ENCODE measurements at regions of chr14 and their contacts with region 1.

Region 1: GRCh38 chr14:58265401-58265800 is 20.8 kb downstream of the PSMA3 start:
- DNase-seq: no peak
- ATAC-seq: no peak
- H3K4me3 ChIP-seq: no peak overlapping the region
- H3K4me3 Mint-ChIP-seq: no peak overlapping the region
- H3K27ac ChIP-seq: no peak overlapping the region
- H3K27ac Mint-ChIP-seq: peak overlapping the region in 7 of 9 donors; percentile 9 to 79 (median 65)
- H3K4me1 ChIP-seq: no peaks in the 10 kb centered on the region
- H3K4me1 Mint-ChIP-seq: peaks cover under 1 to 23% (median 19%) of the 10 kb centered on the region in 7 donors
- H3K27me3 ChIP-seq: no peaks in the 10 kb centered on the region
- H3K27me3 Mint-ChIP-seq: no peaks in the 10 kb centered on the region

Region 2: GRCh38 chr14:58362798-58363412 is 97.5 kb after region 1 on chr14:
- CTCF ChIA-PET with region 1: no interaction called
- POLR2A ChIA-PET with region 1: no interaction called
- intact Hi-C with region 1: loop called in 1 of 2 experiments (anchors 5 kb)
- DNase-seq: peak in 6 of 9 donors; percentile 2 to 55 (median 34)
- ATAC-seq: peak; percentile 63
- H3K4me3 ChIP-seq: no peak overlapping the region
- H3K4me3 Mint-ChIP-seq: no peak overlapping the region
- H3K27ac ChIP-seq: no peak overlapping the region
- H3K27ac Mint-ChIP-seq: no peak overlapping the region
- H3K4me1 ChIP-seq: no peaks in the 10 kb centered on the region
- H3K4me1 Mint-ChIP-seq: peaks cover 0 to 6% (median 0%) of the 10 kb centered on the region in 7 donors
- H3K27me3 ChIP-seq: no peaks in the 10 kb centered on the region
- H3K27me3 Mint-ChIP-seq: no peaks in the 10 kb centered on the region